WTC11 (cell line): ENCODE measurements at regions of chr10 and their contacts with region 1.

Region 1: DNA sequence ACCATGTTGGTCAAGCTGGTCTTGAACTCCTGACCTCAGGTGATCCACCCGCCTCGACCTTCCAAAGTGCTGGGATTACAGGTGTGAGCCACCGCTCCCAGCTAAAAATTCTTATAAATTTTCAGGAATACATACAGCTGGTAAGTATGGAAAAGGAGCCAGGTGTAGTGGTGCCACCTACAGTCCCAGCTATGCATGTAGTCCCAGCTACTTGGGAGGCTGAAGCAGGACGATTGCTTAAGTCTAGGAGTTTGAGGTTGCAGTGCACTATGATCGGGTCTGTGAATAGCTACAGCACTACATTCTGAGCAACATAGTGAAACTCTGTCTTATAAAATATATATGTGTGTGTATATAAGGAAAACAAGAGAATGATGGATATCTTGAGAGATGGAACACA is 19.0 kb downstream of the LDB1 start:
- DNase-seq: no peak
- ATAC-seq: peak; percentile 76
- H3K4me3 Mint-ChIP-seq: no peak overlapping the region
- H3K27ac Mint-ChIP-seq: no peak overlapping the region
- H3K4me1 Mint-ChIP-seq: no peaks in the 10 kb centered on the region
- H3K27me3 Mint-ChIP-seq: no peaks in the 10 kb centered on the region
- CTCF ChIP-seq: no peak

Region 2: DNA sequence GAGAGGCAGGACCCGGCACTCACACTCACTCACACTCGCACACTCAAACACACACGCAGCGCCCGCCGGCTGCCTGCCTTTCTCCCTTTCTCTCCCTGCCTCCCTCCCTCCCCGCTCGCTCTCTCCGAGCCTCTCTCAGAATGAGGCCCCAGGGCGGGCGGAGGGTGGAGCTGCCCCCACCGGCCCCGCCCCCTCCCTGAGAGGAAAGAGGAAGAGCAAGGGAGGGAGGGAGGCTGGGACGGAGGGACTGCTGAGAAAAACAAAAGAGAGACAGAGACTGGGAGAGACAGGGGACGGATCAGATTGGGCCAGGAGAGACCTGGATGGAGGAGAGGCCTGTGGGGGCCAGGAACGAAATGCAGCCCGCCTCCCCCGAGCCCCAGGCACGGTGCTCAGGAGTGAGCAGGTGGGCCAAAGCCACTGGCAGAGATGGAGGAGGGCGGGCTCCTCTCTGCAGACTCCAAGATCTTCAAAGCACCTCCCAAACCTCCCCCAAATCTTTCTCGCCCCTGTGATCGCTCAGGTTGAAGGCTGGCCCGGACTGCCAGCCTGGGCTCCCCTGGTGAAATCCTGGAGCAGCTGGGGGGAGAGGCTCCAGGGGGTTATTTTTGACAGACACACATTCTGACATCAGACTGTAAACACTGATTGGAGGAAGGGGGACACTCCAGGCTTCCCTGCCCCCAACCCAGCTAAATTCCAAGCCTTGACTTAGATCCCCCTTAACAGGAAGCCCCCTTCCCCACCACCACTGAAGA is 13.9 kb after region 1 on chr10:
- CTCF ChIA-PET with region 1: interaction called, 13 read pairs
- POLR2A ChIA-PET with region 1: interaction called, 8 read pairs
- DNase-seq: peak; percentile 91
- ATAC-seq: peak; percentile 60
- H3K4me3 Mint-ChIP-seq: peak overlapping the region; percentile 88
- H3K27ac Mint-ChIP-seq: peak overlapping the region; percentile 93
- H3K4me1 Mint-ChIP-seq: peaks cover 67% of the 10 kb centered on the region
- H3K27me3 Mint-ChIP-seq: no peaks in the 10 kb centered on the region
- CTCF ChIP-seq: no peak